Aorta (tissue), 5 donors: ENCODE measurements at regions of chr10 and their contacts with region 1.

Region 1: GRCh38 chr10:13302814-13303555 is 3.1 kb upstream of the PHYH start:
- DNase-seq: no peak
- ATAC-seq: no peak
- H3K4me3 ChIP-seq: no peak overlapping the region
- H3K27ac ChIP-seq: no peak overlapping the region
- H3K4me1 ChIP-seq: no peaks in the 10 kb centered on the region
- H3K27me3 ChIP-seq: no peaks in the 10 kb centered on the region

Region 2: DNA sequence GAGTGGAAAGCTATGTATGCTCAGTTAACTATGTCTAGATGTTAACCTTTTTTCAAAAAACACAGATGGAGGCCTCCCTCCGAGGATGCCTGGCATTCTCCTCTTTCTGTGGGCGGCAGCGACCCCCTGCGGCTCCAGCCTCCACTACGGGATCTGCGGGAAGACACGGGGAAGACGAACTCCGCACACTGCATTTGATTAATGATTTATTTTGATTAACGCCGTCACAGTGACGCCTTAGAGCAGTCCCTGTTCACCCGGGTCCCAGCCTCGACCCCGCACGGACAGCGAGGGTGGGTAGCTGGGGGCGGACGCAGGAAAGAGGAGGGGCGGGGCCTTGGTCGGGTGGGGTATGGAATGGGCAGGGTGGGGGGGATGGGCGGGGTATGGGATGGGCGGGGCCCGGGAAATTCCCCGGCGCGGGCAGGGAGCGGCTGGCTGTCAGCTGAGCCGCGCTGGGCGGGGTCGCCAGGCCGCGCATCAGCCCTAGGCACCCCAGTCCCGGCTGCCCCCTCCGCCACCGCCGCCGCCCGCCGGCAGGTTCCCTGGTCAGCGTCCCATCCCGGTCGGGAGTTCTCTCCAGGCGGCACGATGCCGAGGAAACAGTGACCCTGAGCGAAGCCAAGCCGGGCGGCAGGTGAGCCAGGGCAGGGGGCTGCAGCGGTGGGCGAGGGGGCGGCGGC is 203.2 kb before region 1 on chr10 and contains the start of gene OPTN:
- intact Hi-C with region 1: no loop called
- DNase-seq: peak; percentile 84 to 93
- ATAC-seq: peak; percentile 91
- H3K4me3 ChIP-seq: peak within 1 kb of the TSS; percentile 61 to 99
- H3K27ac ChIP-seq: peak within 1 kb of the TSS; percentile 3 to 95
- H3K4me1 ChIP-seq: peaks cover 0 to 3% of the 10 kb centered on the region in 2 donors
- H3K27me3 ChIP-seq: no peaks in the 10 kb centered on the region
- total RNA-seq, gene OPTN: 87.4 to 107 TPM

Region 3: GRCh38 chr10:13160934-13161856 is 141.8 kb before region 1 on chr10 and contains the start of gene MCM10:
- intact Hi-C with region 1: loop called (anchors 1 kb)
- DNase-seq: peak; percentile 99
- ATAC-seq: peak; percentile 100
- H3K4me3 ChIP-seq: no peak within 1 kb of the TSS
- H3K27ac ChIP-seq: no peak within 1 kb of the TSS
- H3K4me1 ChIP-seq: no peaks in the 10 kb centered on the region
- H3K27me3 ChIP-seq: no peaks in the 10 kb centered on the region
- total RNA-seq, gene MCM10: 0.78 to 0.81 TPM

Region 4: GRCh38 chr10:13257621-13258140 is 45.3 kb before region 1 on chr10:
- intact Hi-C with region 1: no loop called
- DNase-seq: no peak
- ATAC-seq: no peak
- H3K4me3 ChIP-seq: no peak overlapping the region
- H3K27ac ChIP-seq: no peak overlapping the region
- H3K4me1 ChIP-seq: no peaks in the 10 kb centered on the region
- H3K27me3 ChIP-seq: no peaks in the 10 kb centered on the region

Region 5: GRCh38 chr10:13347500-13348156 is 44.6 kb after region 1 on chr10:
- intact Hi-C with region 1: loop called in 1 of 2 experiments (anchors 2 kb)
- DNase-seq: peak; percentile 89 to 94
- ATAC-seq: peak; percentile 74
- H3K4me3 ChIP-seq: peak overlapping the region; percentile 98
- H3K27ac ChIP-seq: peak overlapping the region; percentile 92 to 99
- H3K4me1 ChIP-seq: peaks cover 0 to 1% of the 10 kb centered on the region in 2 donors
- H3K27me3 ChIP-seq: no peaks in the 10 kb centered on the region

Region 6: DNA sequence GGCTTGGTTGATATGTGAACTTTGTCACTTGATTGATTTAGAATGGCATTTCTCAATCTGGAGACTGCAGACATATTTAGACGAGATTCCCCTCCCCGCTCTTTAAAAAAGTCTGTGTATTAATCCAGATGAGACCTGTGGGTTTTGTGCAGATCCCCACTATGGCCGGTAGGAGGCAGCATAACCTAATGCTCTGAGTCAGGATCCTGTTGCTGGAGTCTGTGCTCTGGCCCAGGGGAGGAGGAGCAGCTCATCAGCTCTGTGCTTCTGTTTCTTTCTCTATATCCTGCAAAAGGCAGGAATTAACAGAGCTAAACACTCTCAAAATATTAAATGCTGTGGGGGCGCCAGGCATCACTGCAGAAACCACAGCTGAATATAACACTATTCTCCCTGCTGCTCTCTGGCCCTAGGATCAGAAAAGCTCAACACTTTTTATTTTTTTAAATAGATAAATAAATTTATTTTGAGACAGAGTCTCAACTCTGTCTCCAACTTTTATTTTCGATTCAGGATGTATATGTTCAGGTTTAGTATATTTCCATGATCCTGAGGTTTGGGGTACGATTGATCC is 69.0 kb after region 1 on chr10:
- intact Hi-C with region 1: no loop called
- DNase-seq: peak in 1 of 2 donors; percentile 72
- ATAC-seq: peak; percentile 87
- H3K4me3 ChIP-seq: no peak overlapping the region
- H3K27ac ChIP-seq: no peak overlapping the region
- H3K4me1 ChIP-seq: no peaks in the 10 kb centered on the region
- H3K27me3 ChIP-seq: no peaks in the 10 kb centered on the region